ENCODE measurements at regions of chr18 and their contacts with region 1.

Region 1: GRCh38 chr18:48136531-48137332 is 206.3 kb upstream of the SMAD2 start:
- DNase-seq: no peak
- H3K4me3 ChIP-seq: peak overlapping the region; percentile 50 to 53 (median 51)
- H3K27ac ChIP-seq: no peak overlapping the region
- H3K4me1 ChIP-seq: peaks cover 36% of the 10 kb centered on the region
- H3K27me3 ChIP-seq: no peaks in the 10 kb centered on the region
- CTCF ChIP-seq: no peak

Region 2: DNA sequence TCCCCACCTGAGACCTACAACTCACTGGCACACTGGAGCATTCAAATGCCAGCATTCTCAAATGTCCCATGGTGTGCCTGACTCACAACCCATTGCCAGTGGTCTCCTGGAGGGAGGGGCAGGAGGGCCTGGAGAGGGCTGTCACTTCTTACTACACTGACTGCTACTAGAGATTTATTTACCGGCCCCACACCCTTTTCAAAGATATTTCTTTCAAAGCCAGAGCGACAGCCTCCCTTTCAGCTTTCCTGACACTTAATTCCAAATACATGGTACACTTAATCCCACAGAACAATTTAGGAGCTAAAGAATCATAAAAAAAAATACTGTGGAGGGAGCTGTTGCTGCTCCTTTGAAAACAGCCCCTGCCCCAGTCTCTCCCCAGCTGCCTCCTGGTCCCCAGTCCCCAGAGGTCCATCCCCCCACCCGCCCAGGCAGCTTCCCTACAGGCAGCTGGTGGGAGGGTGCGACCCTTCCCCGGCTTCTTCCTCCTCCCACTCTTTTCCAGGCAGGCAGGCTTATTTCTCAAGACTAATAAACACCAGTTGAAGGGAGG is 77.2 kb before region 1 on chr18:
- CTCF ChIA-PET with region 1: no interaction called
- dilution Hi-C with region 1: loop called (anchors 5 kb)
- in situ Hi-C with region 1: no loop called
- intact Hi-C with region 1: no loop called
- DNase-seq: no peak
- H3K4me3 ChIP-seq: no peak overlapping the region
- H3K27ac ChIP-seq: no peak overlapping the region
- H3K4me1 ChIP-seq: peaks cover 3% of the 10 kb centered on the region
- H3K27me3 ChIP-seq: no peaks in the 10 kb centered on the region
- CTCF ChIP-seq: no peak

Region 3: GRCh38 chr18:48080546-48080945 is 56.2 kb before region 1 on chr18:
- CTCF ChIA-PET with region 1: no interaction called
- dilution Hi-C with region 1: no loop called
- in situ Hi-C with region 1: no loop called
- intact Hi-C with region 1: no loop called
- DNase-seq: no peak
- H3K4me3 ChIP-seq: no peak overlapping the region
- H3K27ac ChIP-seq: no peak overlapping the region
- H3K4me1 ChIP-seq: peaks cover 3% of the 10 kb centered on the region
- H3K27me3 ChIP-seq: no peaks in the 10 kb centered on the region
- CTCF ChIP-seq: no peak

Region 4: DNA sequence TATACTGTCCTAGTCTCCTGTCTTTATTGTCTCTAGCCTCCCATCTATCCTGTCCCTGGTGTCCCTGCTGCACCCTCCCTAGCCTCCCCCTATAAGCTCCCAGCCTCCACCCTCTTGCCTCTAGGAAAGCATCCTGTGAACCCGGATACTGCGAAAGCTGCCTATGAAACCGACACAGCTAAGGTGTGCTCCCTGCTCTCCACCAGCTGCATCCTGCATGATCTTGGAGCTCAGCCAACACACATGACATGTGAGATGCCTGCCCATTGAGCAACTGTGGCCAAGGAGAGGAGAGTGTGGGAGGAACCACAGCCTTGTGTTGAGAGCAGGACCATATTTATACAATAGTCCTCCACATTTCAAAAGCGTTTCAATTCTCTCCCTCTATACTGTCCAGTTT is 85.4 kb after region 1 on chr18:
- CTCF ChIA-PET with region 1: no interaction called
- dilution Hi-C with region 1: loop called (anchors 5 kb)
- in situ Hi-C with region 1: no loop called
- intact Hi-C with region 1: no loop called
- DNase-seq: peak; percentile 95
- H3K4me3 ChIP-seq: no peak overlapping the region
- H3K27ac ChIP-seq: no peak overlapping the region
- H3K4me1 ChIP-seq: peaks cover 22% of the 10 kb centered on the region
- H3K27me3 ChIP-seq: no peaks in the 10 kb centered on the region
- CTCF ChIP-seq: no peak